GM10248 (cell line): ENCODE measurements at regions of chr11 and their contacts with region 1.

Region 1: GRCh38 chr11:72024069-72024754 is 25.5 kb downstream of the IL18BP start:
- DNase-seq: no peak
- CTCF ChIP-seq: no peak

Region 2: GRCh38 chr11:72048766-72049456 is 24.7 kb after region 1 on chr11:
- CTCF ChIA-PET with region 1: interaction called, 159 read pairs
- POLR2A ChIA-PET with region 1: no interaction called
- DNase-seq: no peak
- CTCF ChIP-seq: no peak

Region 3: DNA sequence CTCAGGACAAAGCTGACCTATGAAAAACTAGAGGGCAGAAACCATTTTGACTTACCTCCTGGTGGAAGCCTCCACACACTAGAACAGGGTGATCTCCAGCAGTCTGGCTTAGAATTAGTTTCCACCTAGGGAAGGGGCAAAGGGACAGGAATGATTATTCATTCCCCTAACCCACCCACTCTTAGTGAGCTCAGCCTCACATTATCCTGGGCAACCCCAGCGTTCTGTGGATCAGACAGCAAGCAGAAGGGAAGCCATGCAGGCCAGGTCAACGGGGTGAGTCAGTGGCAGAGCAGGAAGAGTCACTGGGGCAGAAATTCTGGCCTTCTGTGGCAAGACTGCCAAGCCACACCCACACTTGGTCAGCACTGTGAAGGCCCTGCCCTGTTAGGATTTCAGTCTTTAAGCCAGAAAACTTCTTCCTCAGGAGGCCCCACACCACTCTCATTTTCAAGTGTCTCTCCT is 45.6 kb after region 1 on chr11:
- CTCF ChIA-PET with region 1: interaction called, 21 read pairs
- POLR2A ChIA-PET with region 1: no interaction called
- DNase-seq: peak; percentile 26
- CTCF ChIP-seq: no peak

Region 4: DNA sequence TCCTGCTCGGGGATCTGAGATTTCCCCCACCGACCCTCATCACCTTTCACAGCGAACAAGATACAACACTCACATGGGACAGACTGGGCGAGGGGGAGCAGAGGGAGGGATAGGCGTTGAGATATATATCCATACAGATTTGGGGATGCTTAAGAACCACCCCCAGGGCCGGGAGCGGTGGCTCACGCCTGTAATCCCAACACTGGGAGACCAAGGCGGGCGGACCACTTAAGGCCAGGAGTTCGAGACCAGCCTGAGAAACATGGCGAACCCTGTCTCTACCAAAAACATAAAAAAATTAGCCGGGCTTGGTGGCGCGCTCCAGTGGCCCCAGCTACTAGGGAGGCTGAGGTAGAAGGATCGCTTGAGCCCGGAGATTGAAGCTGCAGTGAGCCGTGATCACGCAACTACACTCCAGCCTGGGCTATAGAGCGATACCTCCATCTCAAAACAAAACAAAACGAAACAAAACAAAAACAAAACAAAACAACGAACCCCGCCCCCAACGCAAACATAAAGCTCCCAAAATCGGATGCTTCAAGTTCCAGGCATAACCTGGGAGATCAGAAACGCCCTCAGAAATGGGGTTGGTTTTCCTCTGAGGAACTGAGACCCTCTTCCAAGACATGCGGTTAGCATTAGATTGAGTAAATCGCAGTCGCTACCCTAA is 56.9 kb after region 1 on chr11:
- CTCF ChIA-PET with region 1: interaction called, 49 read pairs
- POLR2A ChIA-PET with region 1: interaction called, 3 read pairs
- DNase-seq: no peak
- CTCF ChIP-seq: no peak

Region 5: DNA sequence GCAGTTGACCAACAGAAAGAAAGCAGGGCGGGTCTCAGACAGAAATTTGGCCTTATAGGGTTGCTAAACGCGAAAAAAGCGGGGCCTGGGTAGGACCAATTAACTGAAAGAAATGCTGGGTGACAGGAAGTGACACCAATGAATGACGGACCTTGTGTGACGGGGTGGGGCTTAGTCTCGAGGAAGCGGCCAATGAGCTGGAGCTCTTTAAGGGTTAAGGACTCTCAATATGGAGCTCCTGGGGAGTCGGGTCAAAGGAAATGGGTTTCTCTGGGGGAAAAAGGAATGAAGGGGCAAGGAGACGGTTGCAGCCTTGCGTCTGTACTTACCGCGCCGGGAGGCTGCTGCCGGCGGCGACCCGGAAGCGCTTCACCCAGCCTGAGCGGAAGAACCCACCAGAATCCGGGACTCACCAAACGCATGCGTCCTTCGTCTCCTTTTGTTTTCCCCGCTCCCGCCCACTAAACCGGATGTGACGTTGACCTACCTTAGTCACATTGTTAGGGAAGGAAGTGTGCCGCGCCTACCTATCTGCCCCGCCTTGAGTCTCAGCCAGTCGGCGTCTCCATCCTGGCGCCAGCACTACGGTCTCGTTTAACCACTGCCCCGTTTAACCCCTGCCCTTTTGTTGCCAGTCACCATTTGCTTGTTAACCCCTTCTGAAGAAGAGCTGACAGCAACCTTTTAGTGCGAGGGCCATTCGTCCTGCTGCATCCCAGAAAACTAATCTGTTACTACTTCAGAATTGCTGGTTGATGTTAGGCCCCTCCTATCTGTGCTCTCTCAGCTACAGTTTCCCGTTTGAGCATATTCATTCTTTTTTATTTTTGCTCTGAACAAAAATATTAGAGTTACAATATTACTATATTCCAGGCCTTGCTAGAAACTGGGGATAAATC is 88.4 kb after region 1 on chr11 and contains the start of gene ANAPC15:
- CTCF ChIA-PET with region 1: interaction called, 12 read pairs
- POLR2A ChIA-PET with region 1: no interaction called
- DNase-seq: peak; percentile 91
- CTCF ChIP-seq: no peak